ENCODE measurements at regions of chr5 and their contacts with region 1.

Region 1: GRCh38 chr5:108260117-108260857 is 121.6 kb downstream of the FBXL17 start:
- DNase-seq: peak; percentile 77
- H3K4me3 ChIP-seq: no peak overlapping the region
- H3K27ac ChIP-seq: no peak overlapping the region
- H3K4me1 ChIP-seq: peaks cover 0 to 28% (median 16%) of the 10 kb centered on the region in 4 donors
- H3K27me3 ChIP-seq: no peaks in the 10 kb centered on the region
- CTCF ChIP-seq: peak; percentile 64 to 91 (median 79)
- EP300 ChIP-seq: no peak
- POLR2A ChIP-seq: no peak

Region 2: DNA sequence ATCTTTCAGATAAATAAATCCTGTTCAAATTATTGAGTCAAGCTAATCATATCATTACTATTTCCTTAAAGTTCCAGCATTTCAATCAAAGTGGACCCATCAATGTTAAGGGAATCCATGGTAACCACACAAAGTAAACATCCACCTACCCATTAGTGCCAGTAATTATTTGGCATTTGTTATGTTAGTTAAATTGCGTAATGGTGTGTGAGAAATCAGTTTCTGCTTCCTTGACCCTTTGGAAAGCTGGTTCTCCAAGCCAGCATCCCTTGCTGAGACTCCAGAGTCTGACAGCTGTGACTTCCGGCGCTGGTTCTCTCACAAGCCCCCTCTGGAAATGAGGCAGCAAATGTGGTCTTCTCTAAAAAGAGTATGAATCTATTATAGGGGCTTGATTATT is 281.0 kb before region 1 on chr5:
- intact Hi-C with region 1: no loop called
- DNase-seq: no peak
- H3K4me3 ChIP-seq: no peak overlapping the region
- H3K27ac ChIP-seq: no peak overlapping the region
- H3K4me1 ChIP-seq: no peaks in the 10 kb centered on the region
- H3K27me3 ChIP-seq: no peaks in the 10 kb centered on the region
- CTCF ChIP-seq: no peak
- EP300 ChIP-seq: no peak
- POLR2A ChIP-seq: no peak

Region 3: DNA sequence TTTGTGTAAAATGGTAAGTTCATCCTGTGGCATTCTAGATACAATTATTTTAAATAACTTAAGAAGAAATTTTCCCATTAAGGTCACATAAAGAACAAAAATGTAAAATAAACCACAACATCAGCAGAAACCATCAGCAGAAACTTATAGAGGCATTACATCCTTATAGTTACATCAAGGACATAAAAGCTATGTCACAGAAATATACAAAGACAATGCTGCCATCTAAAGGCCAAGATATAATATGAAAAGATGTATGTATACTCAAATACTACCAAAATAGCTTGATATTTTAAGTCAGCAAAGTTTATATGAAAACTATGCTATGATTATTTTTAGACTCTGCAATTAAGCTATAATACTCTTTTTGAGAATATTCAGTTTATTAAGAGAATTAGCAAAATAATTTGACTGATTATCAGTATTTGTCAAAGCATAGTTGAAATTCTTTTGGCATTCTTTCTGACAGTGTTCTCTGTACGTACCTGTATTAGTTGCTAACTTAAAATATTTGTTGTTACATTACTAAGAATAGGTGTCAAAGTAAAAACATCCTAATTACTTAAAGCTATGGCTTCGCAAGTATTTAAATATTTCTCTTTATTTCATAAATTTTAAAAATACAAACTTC is 85.4 kb after region 1 on chr5:
- intact Hi-C with region 1: loop called (anchors 5 kb)
- DNase-seq: no peak
- H3K4me3 ChIP-seq: no peak overlapping the region
- H3K27ac ChIP-seq: no peak overlapping the region
- H3K4me1 ChIP-seq: no peaks in the 10 kb centered on the region
- H3K27me3 ChIP-seq: no peaks in the 10 kb centered on the region
- CTCF ChIP-seq: peak in 2 of 4 experiments; percentile 10 to 33
- EP300 ChIP-seq: no peak
- POLR2A ChIP-seq: no peak

Region 4: DNA sequence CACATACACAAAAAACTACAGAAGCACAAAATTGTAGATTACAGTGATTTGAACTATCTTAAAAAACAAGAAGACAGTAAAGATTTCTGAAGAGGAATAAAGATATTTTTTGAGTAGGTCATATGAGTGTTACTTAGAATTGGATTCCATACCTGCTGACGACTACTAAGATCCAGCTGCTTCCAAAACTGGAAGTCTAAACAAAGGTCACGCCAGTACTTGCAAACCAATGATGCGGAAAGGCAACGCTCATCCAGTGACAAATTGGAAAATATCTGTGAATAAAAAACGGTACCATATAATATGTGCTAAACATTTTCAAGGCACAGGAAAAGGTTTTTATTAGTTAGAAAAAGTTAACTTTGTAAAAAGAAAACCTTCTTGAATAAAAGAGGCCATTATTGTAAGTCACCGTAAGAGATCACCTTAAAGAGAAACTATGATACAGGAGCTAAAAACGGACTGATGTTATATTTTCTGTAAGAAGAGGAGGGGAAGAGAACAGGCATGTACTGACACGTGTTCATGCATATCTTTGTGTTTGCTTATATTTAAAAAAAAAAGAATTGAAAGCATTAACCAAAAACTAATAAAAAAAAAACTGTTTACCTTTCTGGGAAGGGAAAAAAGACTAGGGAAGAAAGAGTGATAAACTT is 107.5 kb after region 1 on chr5:
- intact Hi-C with region 1: no loop called
- DNase-seq: no peak
- H3K4me3 ChIP-seq: no peak overlapping the region
- H3K27ac ChIP-seq: no peak overlapping the region
- H3K4me1 ChIP-seq: peaks cover 0 to 14% (median 0%) of the 10 kb centered on the region in 4 donors
- H3K27me3 ChIP-seq: no peaks in the 10 kb centered on the region
- CTCF ChIP-seq: no peak
- EP300 ChIP-seq: no peak
- POLR2A ChIP-seq: no peak